ENCODE measurements at regions of chr14 and their contacts with region 1.

Region 1: GRCh38 chr14:51448831-51449670 is 202.7 kb upstream of the FRMD6 start:
- DNase-seq: no peak
- ATAC-seq: peak; percentile 63
- H3K4me3 ChIP-seq: no peak overlapping the region
- H3K27ac ChIP-seq: 0 out of 2 replicates have a peak overlapping the region, but pooled peaks have one; percentile 1
- H3K4me1 ChIP-seq: peaks cover 20% of the 10 kb centered on the region
- H3K27me3 ChIP-seq: no peaks in the 10 kb centered on the region
- CTCF ChIP-seq: no peak

Region 2: GRCh38 chr14:51507906-51508511 is 59.0 kb after region 1 on chr14:
- CTCF ChIA-PET with region 1: no interaction called
- POLR2A ChIA-PET with region 1: interaction called, 16 read pairs
- intact Hi-C with region 1: no loop called
- DNase-seq: no peak
- ATAC-seq: no peak
- H3K4me3 ChIP-seq: no peak overlapping the region
- H3K27ac ChIP-seq: no peak overlapping the region
- H3K4me1 ChIP-seq: no peaks in the 10 kb centered on the region
- H3K27me3 ChIP-seq: no peaks in the 10 kb centered on the region
- CTCF ChIP-seq: no peak

Region 3: DNA sequence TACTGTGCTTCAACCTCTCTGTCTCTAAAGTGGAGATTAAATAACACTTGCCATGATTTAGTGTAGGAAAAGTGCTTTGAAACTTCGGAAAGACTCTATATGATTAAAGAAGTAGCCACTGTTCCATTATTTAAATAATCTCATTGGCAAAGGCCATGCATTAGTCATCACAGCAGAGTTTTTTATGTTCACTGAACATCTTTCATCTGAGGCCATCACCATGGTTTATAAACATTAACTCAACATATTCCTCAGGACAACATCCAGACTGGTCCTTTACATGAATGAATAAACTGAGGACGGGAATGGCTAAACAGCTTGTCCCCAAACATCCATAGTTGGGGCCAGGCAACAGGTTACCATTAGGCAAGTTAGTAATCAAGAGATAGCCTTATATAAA is 78.0 kb after region 1 on chr14:
- CTCF ChIA-PET with region 1: no interaction called
- POLR2A ChIA-PET with region 1: no interaction called
- intact Hi-C with region 1: no loop called
- DNase-seq: peak; percentile 50
- ATAC-seq: peak; percentile 92
- H3K4me3 ChIP-seq: no peak overlapping the region
- H3K27ac ChIP-seq: 0 out of 2 replicates have a peak overlapping the region, but pooled peaks have one; percentile 0
- H3K4me1 ChIP-seq: peaks cover 17% of the 10 kb centered on the region
- H3K27me3 ChIP-seq: no peaks in the 10 kb centered on the region
- CTCF ChIP-seq: no peak